Heart left ventricle (tissue), 16 donors: ENCODE measurements at regions of chr9 and their contacts with region 1.

Region 1: DNA sequence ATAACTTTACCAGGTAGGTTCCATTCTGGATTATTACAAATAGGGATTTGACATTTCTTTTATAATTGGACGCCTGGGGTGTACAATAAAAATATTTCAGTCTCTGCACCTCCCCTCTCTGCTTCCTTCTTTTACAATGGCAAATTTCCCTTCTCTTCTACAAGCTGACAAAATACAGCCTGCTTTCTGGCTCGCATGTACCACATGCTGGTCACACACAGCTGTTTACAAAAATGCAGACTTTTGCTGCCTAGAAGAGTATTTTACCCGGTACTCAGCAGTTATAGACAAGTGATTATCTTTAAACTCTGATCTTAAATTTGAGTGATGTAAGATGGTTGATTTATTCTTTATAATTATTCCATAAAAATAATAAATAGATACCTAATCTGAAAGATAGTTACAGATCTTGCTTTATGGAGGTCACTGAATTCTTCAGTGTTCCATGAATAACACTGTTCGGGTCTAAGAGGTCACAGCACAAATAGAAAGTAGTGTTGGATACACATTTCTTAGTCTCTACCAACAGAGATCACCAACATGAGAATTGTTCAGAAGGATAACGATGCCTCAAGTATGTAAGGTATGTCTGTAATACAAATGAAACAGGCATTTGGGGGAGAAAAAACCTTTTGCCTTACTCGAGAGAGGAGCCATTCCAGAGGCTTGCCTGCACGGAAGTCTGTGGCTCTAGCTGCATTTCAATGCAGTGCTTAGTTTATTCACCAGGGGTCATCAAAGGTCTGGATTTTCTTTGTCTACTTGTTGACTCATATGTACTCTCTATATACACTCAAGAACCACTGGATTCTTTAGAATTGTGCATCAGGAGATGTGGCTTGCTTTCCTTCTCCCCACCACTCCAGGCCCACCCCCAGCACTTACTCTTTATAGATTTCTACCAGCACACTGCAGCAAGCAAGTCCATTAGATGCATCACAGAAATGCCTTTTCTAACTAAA is 206.6 kb upstream of the RFX3 start:
- DNase-seq: peak in 2 of 5 donors; percentile 31 to 44
- ATAC-seq: peak; percentile 95 to 99 (median 95)
- H3K4me3 ChIP-seq: peak overlapping the region in 5 of 12 donors; percentile 15 to 33 (median 26)
- H3K27ac ChIP-seq: peak overlapping the region in 7 of 12 donors; percentile 5 to 62 (median 35)
- H3K4me1 ChIP-seq: peaks cover 0 to 11% (median 0%) of the 10 kb centered on the region in 12 donors
- H3K27me3 ChIP-seq: no peaks in the 10 kb centered on the region
- CTCF ChIP-seq: peak; percentile 57 to 78 (median 72)
- POLR2A ChIP-seq: no peak

Region 2: GRCh38 chr9:3467593-3468219 is 264.7 kb before region 1 on chr9:
- intact Hi-C with region 1: loop called in 1 of 10 experiments (anchors 10 kb)
- DNase-seq: peak; percentile 49 to 70 (median 60)
- ATAC-seq: peak; percentile 79 to 96 (median 94)
- H3K4me3 ChIP-seq: no peak overlapping the region
- H3K27ac ChIP-seq: no peak overlapping the region
- H3K4me1 ChIP-seq: peaks cover 0 to 25% (median 7%) of the 10 kb centered on the region in 12 donors
- H3K27me3 ChIP-seq: no peaks in the 10 kb centered on the region
- CTCF ChIP-seq: peak; percentile 67 to 90 (median 82)
- POLR2A ChIP-seq: no peak

Region 3: GRCh38 chr9:3746296-3747275 is 14.2 kb after region 1 on chr9:
- intact Hi-C with region 1: no loop called
- DNase-seq: no peak
- ATAC-seq: no peak
- H3K4me3 ChIP-seq: no peak overlapping the region
- H3K27ac ChIP-seq: no peak overlapping the region
- H3K4me1 ChIP-seq: peaks cover 0 to under 1% (median 0%) of the 10 kb centered on the region in 12 donors
- H3K27me3 ChIP-seq: no peaks in the 10 kb centered on the region
- CTCF ChIP-seq: no peak
- POLR2A ChIP-seq: no peak

Region 4: DNA sequence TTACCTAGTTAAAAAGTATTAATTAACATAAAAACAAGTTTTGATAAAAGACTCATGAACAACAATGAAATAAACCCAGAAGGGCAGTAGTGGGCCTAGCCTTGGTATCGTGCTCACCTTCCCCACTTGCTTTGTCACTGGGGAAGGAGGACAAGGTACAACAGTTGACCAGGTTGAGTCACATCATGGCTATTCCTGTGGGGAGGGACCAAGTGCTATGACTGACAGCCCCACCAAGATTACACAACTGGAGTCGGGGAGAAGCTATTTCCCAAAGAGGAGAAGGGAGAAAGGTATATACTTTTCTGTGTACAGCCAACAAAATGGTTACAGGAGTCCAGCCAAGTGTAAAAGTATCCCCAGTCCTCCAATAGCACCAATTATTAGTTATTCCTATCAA is 44.8 kb after region 1 on chr9:
- intact Hi-C with region 1: no loop called
- DNase-seq: no peak
- ATAC-seq: no peak
- H3K4me3 ChIP-seq: no peak overlapping the region
- H3K27ac ChIP-seq: no peak overlapping the region
- H3K4me1 ChIP-seq: no peaks in the 10 kb centered on the region
- H3K27me3 ChIP-seq: no peaks in the 10 kb centered on the region
- CTCF ChIP-seq: no peak
- POLR2A ChIP-seq: no peak

Region 5: GRCh38 chr9:4117835-4118610 is 385.7 kb after region 1 on chr9:
- intact Hi-C with region 1: loop called in 4 of 10 experiments (anchors 5 to 10 kb)
- DNase-seq: peak in 1 of 5 donors; percentile 36
- ATAC-seq: peak in 1 of 4 donors; percentile 41
- H3K4me3 ChIP-seq: no peak overlapping the region
- H3K27ac ChIP-seq: peak overlapping the region in 3 of 12 donors; percentile 13 to 32 (median 25)
- H3K4me1 ChIP-seq: peaks cover 0 to 51% (median 0%) of the 10 kb centered on the region in 12 donors
- H3K27me3 ChIP-seq: no peaks in the 10 kb centered on the region
- CTCF ChIP-seq: peak in 10 of 12 donors; percentile 12 to 51 (median 40)
- POLR2A ChIP-seq: no peak

Region 6: GRCh38 chr9:4297151-4297785 is 564.9 kb after region 1 on chr9:
- intact Hi-C with region 1: loop called in 1 of 10 experiments (anchors 10 kb)
- DNase-seq: peak; percentile 68 to 83 (median 78)
- ATAC-seq: peak in 3 of 4 donors; percentile 50 to 65 (median 53)
- H3K4me3 ChIP-seq: peak overlapping the region; percentile 67 to 91 (median 76)
- H3K27ac ChIP-seq: peak overlapping the region; percentile 72 to 93 (median 85)
- H3K4me1 ChIP-seq: peaks cover 0 to 47% (median 2%) of the 10 kb centered on the region in 12 donors
- H3K27me3 ChIP-seq: peaks cover 0 to 13% (median 0%) of the 10 kb centered on the region in 9 donors
- CTCF ChIP-seq: peak in 9 of 12 donors; percentile 21 to 60 (median 45)
- POLR2A ChIP-seq: no peak

Region 7: GRCh38 chr9:4339357-4339756 is 607.0 kb after region 1 on chr9:
- intact Hi-C with region 1: loop called in 7 of 10 experiments (anchors 2 to 10 kb)
- DNase-seq: peak; percentile 68 to 87 (median 78)
- ATAC-seq: peak in 3 of 4 donors; percentile 55 to 71 (median 58)
- H3K4me3 ChIP-seq: no peak overlapping the region
- H3K27ac ChIP-seq: no peak overlapping the region
- H3K4me1 ChIP-seq: peaks cover 0 to 8% (median 3%) of the 10 kb centered on the region in 12 donors
- H3K27me3 ChIP-seq: no peaks in the 10 kb centered on the region
- CTCF ChIP-seq: peak; percentile 87 to 98 (median 92)
- POLR2A ChIP-seq: no peak

Region 8: DNA sequence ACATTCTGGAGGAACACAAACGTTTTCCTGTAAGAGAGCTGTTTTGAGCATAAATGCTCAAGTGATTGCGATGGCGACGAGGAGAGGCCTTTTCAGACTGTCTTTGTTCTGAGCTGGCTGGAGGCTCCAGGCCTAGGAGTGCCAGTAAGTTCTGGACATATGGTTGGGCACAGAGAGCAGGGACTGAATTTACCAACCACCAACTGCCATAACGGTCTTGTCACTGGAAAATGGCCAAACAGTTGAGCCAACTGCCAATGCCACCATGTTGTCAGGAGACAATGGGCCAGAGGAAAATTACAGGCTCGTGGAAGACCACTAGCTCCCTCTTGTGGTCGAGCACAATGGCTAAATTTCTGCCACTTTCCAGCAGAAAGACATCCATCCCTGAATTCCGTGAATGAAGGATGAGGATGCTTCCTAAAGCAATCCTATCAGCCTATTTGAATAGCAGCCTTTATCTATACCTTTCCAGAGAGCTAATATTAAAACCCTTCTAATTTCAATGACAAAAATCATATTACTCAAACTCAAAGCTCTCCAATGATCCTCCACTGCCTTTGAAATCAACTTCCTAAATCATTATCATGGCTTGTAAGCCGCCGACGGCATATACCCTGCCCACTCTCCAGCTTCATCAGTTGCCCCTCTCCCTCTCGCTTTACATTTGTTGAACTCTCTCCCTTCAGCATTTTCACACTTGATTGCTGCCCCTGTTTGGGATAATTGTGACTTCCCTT is 634.4 kb after region 1 on chr9:
- intact Hi-C with region 1: loop called in 5 of 10 experiments (anchors 5 to 10 kb)
- DNase-seq: peak in 1 of 5 donors; percentile 7
- ATAC-seq: peak in 1 of 4 donors; percentile 9
- H3K4me3 ChIP-seq: no peak overlapping the region
- H3K27ac ChIP-seq: no peak overlapping the region
- H3K4me1 ChIP-seq: no peaks in the 10 kb centered on the region
- H3K27me3 ChIP-seq: no peaks in the 10 kb centered on the region
- CTCF ChIP-seq: peak; percentile 37 to 63 (median 54)
- POLR2A ChIP-seq: no peak